ENCODE measurements at regions of chr12 and their contacts with region 1.

Region 1: DNA sequence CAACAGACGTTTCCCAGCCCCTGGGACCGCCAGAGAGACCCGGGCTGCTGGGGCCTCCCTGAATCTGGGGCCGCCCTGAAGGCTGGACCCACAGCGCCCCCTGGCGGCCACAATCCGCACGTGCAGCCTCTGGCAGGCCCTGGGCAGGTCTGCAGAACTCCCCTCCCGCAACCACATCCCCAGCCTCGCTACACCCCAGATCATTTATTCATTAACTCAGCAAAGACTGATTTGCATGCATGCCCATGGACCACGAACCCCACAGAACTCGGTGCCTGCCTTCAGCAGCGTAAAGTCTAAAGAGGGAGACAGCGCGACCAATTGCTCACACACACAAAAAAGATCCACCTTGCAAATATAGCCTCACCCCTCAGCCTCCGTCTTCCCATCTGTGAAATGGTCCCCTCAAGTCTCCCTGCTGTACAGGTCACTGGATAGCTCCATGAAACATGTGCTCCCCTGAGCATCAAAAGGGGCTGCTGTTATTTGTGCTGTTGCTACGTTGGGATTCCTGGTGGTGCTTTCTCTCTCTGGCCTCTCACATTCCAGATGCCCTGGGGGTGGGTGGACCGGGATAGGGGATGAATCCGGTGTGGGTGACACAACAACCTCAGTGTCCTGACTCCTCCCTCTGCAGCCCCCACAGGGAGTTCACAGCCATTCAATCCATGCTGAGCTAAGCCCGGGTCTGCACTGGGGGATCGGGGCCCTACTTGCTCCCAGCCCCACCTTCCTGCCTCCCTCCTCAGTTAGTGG is 96.4 kb downstream of the SCARB1 start:
- DNase-seq: peak; percentile 70 to 98 (median 89)

Region 2: GRCh38 chr12:124053851-124054250 is 713.4 kb before region 1 on chr12:
- intact Hi-C with region 1: loop called (anchors 5 kb)
- DNase-seq: peak in 7 of 10 donors; percentile 20 to 93 (median 57)

Region 3: GRCh38 chr12:124369055-124369900 is 398.0 kb before region 1 on chr12:
- intact Hi-C with region 1: loop called (anchors 5 kb)
- DNase-seq: peak in 9 of 10 donors; percentile 69 to 96 (median 76)

Region 4: GRCh38 chr12:124655698-124656516 is 111.3 kb before region 1 on chr12:
- intact Hi-C with region 1: loop called (anchors 5 kb)
- DNase-seq: peak; percentile 72 to 98 (median 81)